ENCODE measurements at regions of chr14 and their contacts with region 1.

Region 1: GRCh38 chr14:52044791-52045611 is 23.9 kb downstream of the NID2 start:
- DNase-seq: no peak
- ATAC-seq: no peak
- H3K4me3 Mint-ChIP-seq: no peak overlapping the region
- H3K27ac Mint-ChIP-seq: no peak overlapping the region
- H3K4me1 Mint-ChIP-seq: peaks cover 11% of the 10 kb centered on the region
- H3K27me3 Mint-ChIP-seq: no peaks in the 10 kb centered on the region
- CTCF ChIP-seq: no peak

Region 2: GRCh38 chr14:52279405-52279804 is 234.4 kb after region 1 on chr14:
- CTCF ChIA-PET with region 1: interaction called, 3 read pairs
- POLR2A ChIA-PET with region 1: no interaction called
- intact Hi-C with region 1: loop called (anchors 5 kb)
- DNase-seq: no peak
- ATAC-seq: no peak
- H3K4me3 Mint-ChIP-seq: no peak overlapping the region
- H3K27ac Mint-ChIP-seq: no peak overlapping the region
- H3K4me1 Mint-ChIP-seq: peaks cover 5% of the 10 kb centered on the region
- H3K27me3 Mint-ChIP-seq: no peaks in the 10 kb centered on the region
- CTCF ChIP-seq: no peak

Measured in activated CD8-positive, alpha-beta T cell treated with anti-CD3 and anti-CD28 coated beads for 36 hours (primary cell).